ENCODE measurements at regions of chr22 and their contacts with region 1.

Region 1: DNA sequence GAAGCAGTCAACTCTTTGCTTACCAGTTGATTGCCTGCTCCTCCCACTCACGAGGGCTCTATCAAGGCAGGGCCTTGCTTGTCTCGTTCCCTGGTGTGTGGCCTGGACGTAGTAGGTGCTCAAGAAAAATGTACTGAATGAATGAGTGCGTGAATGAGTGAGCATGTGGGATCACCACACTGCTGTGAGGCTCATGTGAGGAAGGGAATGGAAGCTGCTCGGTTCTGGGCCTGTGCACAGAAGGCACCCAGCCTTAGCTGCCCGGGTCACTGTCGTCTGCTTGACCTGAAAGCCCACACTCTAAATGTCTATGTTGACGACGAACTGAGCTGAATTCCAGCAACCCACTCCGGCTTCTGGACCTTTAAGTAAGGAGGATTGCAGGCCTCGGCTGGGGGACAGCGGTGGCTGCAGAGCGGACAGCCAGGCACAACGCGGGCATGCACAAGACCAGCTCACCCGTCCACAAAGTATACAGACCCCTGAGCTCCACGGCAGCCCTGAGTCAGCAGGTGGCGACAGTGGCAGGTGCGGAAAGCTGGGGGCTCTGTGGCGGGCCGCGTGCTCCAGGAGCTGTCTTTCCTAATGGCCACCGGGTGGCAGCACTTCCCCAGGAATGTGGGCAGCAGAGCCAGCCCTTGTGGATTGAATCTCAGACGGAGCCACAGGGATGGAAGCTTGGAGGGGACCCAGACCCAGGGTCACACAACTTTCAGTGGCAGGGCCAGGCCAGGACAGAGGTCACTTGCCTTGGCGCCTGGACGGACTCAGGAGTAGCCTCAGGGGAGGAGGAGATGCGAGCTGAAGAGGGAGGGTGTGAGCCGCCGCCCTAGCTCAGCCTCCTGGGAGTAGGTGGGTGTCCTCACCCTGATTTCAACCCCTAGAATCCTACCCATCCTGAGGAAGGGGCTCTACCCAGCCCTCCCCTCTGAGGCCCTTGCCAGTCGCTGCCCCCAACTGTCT is 5.0 kb upstream of the PICK1 start:
- DNase-seq: peak; percentile 74
- ATAC-seq: peak; percentile 78
- H3K4me3 ChIP-seq: no peak overlapping the region
- H3K27ac ChIP-seq: no peak overlapping the region
- H3K4me1 ChIP-seq: no peaks in the 10 kb centered on the region
- H3K27me3 ChIP-seq: no peaks in the 10 kb centered on the region
- CTCF ChIP-seq: peak; percentile 86

Region 2: GRCh38 chr22:37965940-37966664 is 86.1 kb before region 1 on chr22:
- CTCF ChIA-PET with region 1: no interaction called
- POLR2A ChIA-PET with region 1: no interaction called
- intact Hi-C with region 1: no loop called
- DNase-seq: no peak
- ATAC-seq: no peak
- H3K4me3 ChIP-seq: no peak overlapping the region
- H3K27ac ChIP-seq: no peak overlapping the region
- H3K4me1 ChIP-seq: no peaks in the 10 kb centered on the region
- H3K27me3 ChIP-seq: no peaks in the 10 kb centered on the region
- CTCF ChIP-seq: no peak

Region 3: GRCh38 chr22:38104084-38104483 is 51.9 kb after region 1 on chr22:
- CTCF ChIA-PET with region 1: interaction called, 11 read pairs
- POLR2A ChIA-PET with region 1: no interaction called
- intact Hi-C with region 1: no loop called
- DNase-seq: peak; percentile 31
- ATAC-seq: no peak
- H3K4me3 ChIP-seq: no peak overlapping the region
- H3K27ac ChIP-seq: no peak overlapping the region
- H3K4me1 ChIP-seq: no peaks in the 10 kb centered on the region
- H3K27me3 ChIP-seq: no peaks in the 10 kb centered on the region
- CTCF ChIP-seq: peak; percentile 49; the same call in 1 of the 2 replicates

Region 4: DNA sequence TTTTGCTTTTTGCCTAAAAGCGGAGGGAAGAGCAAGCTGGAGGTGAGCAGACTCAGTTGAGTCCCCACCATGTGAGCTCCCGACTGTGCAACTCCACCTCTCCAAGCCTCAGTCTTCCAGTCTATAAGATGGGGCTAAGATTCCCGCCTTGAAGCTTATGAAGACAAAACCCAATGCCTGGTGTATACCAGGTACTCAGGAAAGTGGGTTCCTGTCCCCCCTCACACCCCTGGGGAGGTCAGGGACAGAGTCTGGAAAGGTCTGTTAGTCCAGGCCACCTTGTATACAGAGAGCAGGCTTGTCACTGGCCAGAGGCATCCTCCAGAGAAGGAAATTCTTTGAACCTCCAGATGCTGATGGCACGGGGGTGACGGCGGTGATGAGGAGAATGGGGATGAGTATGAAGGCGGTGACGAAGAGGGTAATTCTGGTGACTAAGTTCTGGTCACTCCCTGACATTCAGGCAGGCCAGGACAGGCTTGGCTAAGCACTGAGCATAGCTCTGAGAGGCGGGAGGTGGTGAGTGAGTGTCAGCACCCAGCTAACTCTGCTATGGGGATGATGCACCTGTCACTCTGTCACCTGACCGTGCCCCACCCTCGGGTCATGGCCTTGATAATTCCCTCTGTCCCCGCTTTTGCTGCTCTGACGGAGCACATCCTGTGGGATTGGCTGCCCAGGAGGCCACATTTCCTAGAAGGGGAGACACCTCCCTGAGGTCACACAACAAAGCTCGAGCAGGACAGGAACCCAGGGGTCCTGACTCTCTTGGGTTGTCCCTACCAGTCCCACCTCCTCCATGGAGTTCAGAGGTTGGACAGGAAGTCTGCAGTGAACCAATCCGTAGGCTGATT is 295.9 kb after region 1 on chr22:
- CTCF ChIA-PET with region 1: no interaction called
- POLR2A ChIA-PET with region 1: no interaction called
- intact Hi-C with region 1: loop called (anchors 5 kb)
- DNase-seq: peak; percentile 55
- ATAC-seq: peak; percentile 74
- H3K4me3 ChIP-seq: no peak overlapping the region
- H3K27ac ChIP-seq: peak overlapping the region; percentile 34
- H3K4me1 ChIP-seq: peaks cover 6% of the 10 kb centered on the region; the same call in 1 of the 2 replicates
- H3K27me3 ChIP-seq: no peaks in the 10 kb centered on the region
- CTCF ChIP-seq: no peak

Region 5: DNA sequence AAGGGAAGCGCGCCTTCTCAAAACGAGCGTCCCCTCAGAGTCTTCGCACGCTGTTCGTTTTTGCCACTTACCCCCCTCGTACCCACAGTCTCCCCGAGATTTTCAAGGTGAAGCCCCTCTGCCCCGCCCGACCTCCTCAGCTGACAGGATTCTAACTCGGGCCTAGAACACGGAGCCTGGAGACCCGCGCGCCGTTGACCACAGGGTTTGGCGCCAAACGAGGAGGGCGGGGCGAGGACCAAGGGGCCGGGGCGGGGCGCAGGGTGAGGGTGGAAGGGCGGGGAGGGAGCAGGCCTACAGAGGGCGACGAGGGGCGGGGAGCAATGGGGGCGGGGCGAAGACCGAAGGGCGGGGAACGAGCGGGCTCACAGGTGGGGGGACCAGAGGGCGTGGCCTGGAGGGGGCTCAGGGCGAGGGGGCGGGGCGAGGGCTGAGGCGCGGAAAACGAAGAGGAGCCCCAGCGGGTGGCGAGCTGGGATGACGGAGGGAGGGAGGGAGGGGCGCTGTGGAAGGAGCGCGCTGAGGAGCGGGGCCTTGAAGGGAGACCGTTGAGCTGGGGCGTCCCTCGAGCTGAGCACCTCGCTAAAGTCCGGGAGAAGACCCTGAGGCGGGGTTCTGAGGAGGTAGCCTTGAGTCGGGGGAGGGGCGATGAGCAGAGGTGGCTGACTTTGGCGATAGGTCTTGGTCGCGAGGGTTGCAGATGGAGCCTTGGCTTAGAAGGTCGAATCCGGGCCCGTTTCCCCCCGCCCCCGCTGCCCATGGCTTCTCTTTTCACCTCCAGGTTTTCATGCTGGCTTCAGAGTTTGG is 518.0 kb after region 1 on chr22 and contains the start of gene DMC1:
- CTCF ChIA-PET with region 1: interaction called, 4 read pairs
- POLR2A ChIA-PET with region 1: no interaction called
- intact Hi-C with region 1: loop called (anchors 5 kb)
- DNase-seq: peak; percentile 77
- ATAC-seq: peak; percentile 65
- H3K4me3 ChIP-seq: peak within 1 kb of the TSS; percentile 80
- H3K27ac ChIP-seq: no peak within 1 kb of the TSS
- H3K4me1 ChIP-seq: peaks cover 9% of the 10 kb centered on the region
- H3K27me3 ChIP-seq: no peaks in the 10 kb centered on the region
- CTCF ChIP-seq: no peak
- total RNA-seq, gene DMC1: not detected in 2 replicates